ENCODE measurements at regions of chr6 and their contacts with region 1.

Region 1: DNA sequence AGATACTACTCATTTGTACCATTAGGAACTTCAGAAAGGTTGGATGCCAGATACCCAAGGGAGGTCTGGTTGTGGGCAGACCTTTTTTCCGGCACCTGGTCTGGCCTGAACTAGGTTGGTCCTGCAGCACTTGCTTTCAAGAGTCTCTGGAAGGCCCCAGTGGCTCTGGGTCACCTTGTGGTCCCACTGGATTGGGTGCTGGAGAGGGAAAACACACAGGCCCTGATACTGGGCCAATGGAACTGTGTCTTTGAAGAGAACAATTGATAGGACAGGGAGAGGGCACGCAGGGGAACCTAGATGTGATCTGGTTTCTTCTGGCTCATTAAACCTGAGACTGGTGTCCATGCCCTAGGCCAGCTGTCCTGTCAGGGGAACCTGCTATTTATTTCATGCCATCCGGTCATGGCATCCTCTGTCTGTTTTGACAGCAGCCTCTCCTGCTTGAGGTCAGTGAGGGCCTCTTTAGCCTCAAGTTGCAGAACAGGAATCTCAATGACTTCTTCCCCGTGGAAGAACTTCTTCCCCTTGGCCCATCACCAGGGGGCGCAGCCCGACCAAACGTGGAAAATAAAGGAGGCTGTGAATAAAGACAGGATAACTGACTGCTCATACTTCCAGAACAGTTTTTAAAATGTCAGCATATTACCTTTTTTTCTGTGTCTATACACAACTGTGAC is 25.0 kb downstream of the TAF8 start:
- DNase-seq: peak; percentile 82
- H3K4me3 ChIP-seq: no peak overlapping the region
- H3K27ac ChIP-seq: no peak overlapping the region
- H3K4me1 ChIP-seq: no peaks in the 10 kb centered on the region
- H3K27me3 ChIP-seq: no peaks in the 10 kb centered on the region
- CTCF ChIP-seq: peak; percentile 78 to 93 (median 88)
- POLR2A ChIP-seq: no peak

Region 2: GRCh38 chr6:42166444-42167141 is 91.3 kb after region 1 on chr6:
- intact Hi-C with region 1: loop called (anchors 2 kb)
- DNase-seq: peak; percentile 71
- H3K4me3 ChIP-seq: no peak overlapping the region
- H3K27ac ChIP-seq: no peak overlapping the region
- H3K4me1 ChIP-seq: no peaks in the 10 kb centered on the region
- H3K27me3 ChIP-seq: no peaks in the 10 kb centered on the region
- CTCF ChIP-seq: peak; percentile 80 to 98 (median 92)
- POLR2A ChIP-seq: no peak

Region 3: DNA sequence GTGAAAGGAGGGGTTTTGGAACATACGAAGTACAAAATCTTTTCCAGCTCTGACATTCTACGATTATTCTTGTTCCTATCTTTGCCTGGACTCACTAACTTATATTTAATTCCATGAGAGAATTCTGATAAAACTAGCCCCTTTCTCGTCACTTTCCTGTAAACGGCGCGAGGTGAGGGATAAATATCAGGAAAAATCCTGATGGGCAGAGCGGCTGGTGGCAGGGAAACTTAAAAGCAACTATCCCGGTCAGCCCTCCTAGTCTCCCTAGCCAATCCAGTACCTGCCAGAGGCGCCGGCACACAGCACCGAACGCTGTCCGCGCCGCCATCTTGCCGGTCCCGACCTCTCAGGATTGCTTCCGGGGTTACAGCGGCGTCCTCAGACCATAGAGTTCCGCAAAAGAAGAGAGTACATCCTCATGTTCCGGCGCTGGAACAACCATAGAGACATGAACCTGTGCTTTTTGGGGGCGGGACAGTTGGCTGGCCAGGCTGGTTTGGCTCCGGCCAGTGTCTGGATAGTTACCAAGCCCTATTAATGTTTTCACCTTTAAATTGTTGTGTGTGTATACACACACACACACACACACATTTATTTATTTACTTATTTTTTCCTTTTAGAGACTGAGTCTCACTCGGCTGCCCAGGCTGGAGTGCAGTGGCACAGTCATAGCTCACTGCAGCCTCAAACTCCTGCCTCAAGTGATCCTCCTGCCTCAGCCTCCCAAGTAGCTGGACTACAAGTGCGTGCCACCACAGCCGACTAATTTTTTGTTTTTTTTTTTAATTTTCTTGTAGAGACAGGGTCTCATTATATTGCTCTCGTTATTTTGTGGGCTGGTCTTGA is 142.4 kb after region 1 on chr6 and contains the start of gene MRPS10:
- intact Hi-C with region 1: loop called (anchors 2 kb)
- DNase-seq: peak; percentile 90
- H3K4me3 ChIP-seq: peak within 1 kb of the TSS; percentile 53 to 66
- H3K27ac ChIP-seq: peak within 1 kb of the TSS; percentile 51 to 72
- H3K4me1 ChIP-seq: no peaks in the 10 kb centered on the region
- H3K27me3 ChIP-seq: no peaks in the 10 kb centered on the region
- CTCF ChIP-seq: peak in 1 of 4 experiments; percentile 3
- POLR2A ChIP-seq: peak; percentile 45
- total RNA-seq, gene MRPS10: 27.5 to 31.8 TPM

Region 4: GRCh38 chr6:42269553-42269952 is 194.3 kb after region 1 on chr6:
- intact Hi-C with region 1: no loop called
- DNase-seq: no peak
- H3K4me3 ChIP-seq: no peak overlapping the region
- H3K27ac ChIP-seq: no peak overlapping the region
- H3K4me1 ChIP-seq: no peaks in the 10 kb centered on the region
- H3K27me3 ChIP-seq: no peaks in the 10 kb centered on the region
- CTCF ChIP-seq: no peak
- POLR2A ChIP-seq: no peak

Region 5: DNA sequence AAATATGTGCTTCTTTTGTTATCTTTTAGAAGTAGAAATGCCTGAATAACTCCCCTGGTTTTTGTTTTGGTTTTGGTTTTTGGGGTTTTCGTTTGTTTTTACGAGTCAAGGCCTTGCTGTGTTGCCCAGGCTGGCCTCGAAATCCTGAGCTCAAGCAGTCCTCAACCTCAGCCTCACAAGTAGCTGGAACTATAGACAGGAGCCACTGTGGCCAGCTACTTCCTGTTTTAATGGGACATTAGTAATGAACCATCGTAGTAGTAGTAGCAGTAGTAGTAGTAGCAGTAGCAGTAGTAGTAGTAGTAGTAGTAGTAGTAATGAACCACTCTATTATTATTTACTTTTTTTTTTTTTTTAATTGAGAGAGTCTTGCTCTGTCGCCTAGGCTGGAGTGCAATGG is 554.5 kb after region 1 on chr6:
- intact Hi-C with region 1: no loop called
- DNase-seq: no peak
- H3K4me3 ChIP-seq: no peak overlapping the region
- H3K27ac ChIP-seq: no peak overlapping the region
- H3K4me1 ChIP-seq: no peaks in the 10 kb centered on the region
- H3K27me3 ChIP-seq: no peaks in the 10 kb centered on the region
- CTCF ChIP-seq: no peak
- POLR2A ChIP-seq: no peak